Esophagus squamous epithelium (tissue), 5 donors: ENCODE measurements at regions of chr5 and their contacts with region 1.

Region 1: DNA sequence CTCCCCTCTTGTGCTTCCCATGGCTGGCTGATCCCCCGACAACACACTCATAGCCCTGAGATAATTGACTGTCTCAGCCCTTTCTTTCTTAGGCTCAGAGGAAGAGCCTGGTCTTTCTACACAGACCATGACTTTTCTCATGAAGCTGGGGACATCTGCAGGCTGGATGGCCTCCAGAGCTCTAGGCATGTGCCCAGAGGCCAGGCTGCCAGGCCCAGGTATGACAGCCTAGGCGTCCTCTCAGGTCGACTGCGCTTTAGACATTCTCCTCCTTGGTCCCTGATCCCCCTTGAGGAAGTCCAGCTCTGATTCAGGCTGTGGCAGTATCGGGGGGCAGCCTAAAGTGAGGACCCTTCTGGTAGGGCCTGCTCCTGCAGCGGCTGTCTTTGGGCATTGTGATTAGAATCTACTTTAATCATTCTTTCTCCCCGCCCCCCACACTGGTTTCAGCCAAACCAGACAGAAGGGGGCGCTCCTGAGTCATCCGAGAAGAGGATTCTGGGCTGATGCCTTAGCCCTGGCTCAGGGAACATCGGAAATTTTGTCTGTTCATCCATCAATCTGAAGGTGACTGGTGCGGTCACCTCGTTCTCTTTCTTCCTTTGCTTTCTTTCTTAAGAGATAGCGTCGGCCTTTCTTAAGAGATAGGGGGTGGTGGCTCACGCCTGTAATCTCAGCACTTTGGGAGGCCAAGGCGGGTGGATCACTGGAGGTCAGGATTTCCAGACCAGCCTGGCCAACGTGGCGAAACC is 66.5 kb upstream of the HSPA9 start:
- DNase-seq: no peak
- H3K4me3 ChIP-seq: no peak overlapping the region
- H3K27ac ChIP-seq: no peak overlapping the region
- H3K4me1 ChIP-seq: peaks cover 0 to 21% (median 4%) of the 10 kb centered on the region in 3 donors
- H3K27me3 ChIP-seq: no peaks in the 10 kb centered on the region
- CTCF ChIP-seq: peak; percentile 56 to 81 (median 62)
- POLR2A ChIP-seq: no peak

Region 2: GRCh38 chr5:138736293-138736692 is 94.6 kb after region 1 on chr5:
- intact Hi-C with region 1: no loop called
- DNase-seq: no peak
- H3K4me3 ChIP-seq: no peak overlapping the region
- H3K27ac ChIP-seq: peak overlapping the region in 1 of 4 donors; percentile 38
- H3K4me1 ChIP-seq: peaks cover 0 to 25% (median 0%) of the 10 kb centered on the region in 3 donors
- H3K27me3 ChIP-seq: no peaks in the 10 kb centered on the region
- CTCF ChIP-seq: no peak
- POLR2A ChIP-seq: no peak

Region 3: GRCh38 chr5:139262742-139263445 is 621.2 kb after region 1 on chr5:
- intact Hi-C with region 1: loop called (anchors 10 kb)
- DNase-seq: no peak
- H3K4me3 ChIP-seq: no peak overlapping the region
- H3K27ac ChIP-seq: no peak overlapping the region
- H3K4me1 ChIP-seq: peaks cover 0 to 9% (median 5%) of the 10 kb centered on the region in 3 donors
- H3K27me3 ChIP-seq: no peaks in the 10 kb centered on the region
- CTCF ChIP-seq: peak; percentile 54 to 89 (median 80)
- POLR2A ChIP-seq: no peak